ENCODE measurements at regions of chr5 and their contacts with region 1.

Region 1: DNA sequence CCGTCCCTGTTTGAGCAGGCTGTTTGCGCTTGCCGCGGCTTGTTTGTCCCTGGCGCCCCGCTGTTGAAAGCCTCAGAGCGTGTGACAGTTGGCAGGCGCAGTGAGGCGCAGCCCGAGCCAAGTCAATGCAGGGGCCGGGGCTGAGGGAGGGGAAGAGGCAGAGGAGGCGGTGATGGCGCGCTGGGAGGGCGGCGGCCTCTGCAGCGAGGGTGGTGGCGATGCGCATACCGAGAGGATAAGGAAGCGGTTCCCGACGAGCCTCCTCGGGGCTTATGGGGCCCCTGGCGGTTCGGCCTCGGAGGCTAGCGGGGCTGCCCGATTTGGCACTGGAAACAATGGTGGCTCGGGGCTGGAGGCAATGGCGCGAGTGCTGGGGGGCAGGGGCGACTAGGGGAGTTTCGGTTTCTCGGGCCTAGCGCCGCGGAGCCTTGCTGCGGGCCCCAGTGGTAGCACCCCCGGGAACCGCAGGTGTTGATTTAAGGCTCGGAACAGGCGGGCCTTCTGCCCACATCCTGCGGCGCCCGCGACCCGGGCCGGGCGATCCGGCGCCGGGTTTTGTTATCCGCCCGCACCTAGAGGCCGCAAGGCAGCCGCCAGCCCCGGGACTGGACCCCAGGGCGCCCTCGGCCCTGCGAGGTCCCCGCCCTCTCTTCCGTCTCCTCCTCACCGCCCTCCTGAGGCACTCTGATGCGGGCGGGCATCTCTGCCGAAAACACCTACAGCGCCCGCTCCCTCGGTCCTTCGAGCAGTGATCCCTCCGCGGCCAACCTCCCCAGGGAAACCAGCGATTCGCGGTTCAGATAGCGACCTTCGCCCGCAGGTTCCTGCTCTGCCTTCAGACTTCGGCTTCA is 947 bp upstream of the LNPEP start:
- DNase-seq: peak; percentile 93 to 95
- H3K4me3 ChIP-seq: peak overlapping the region; percentile 80 to 96
- H3K27ac ChIP-seq: peak overlapping the region; percentile 88 to 98
- H3K4me1 ChIP-seq: peaks cover 0 to 43% (median 21%) of the 10 kb centered on the region in 4 donors
- H3K27me3 ChIP-seq: no peaks in the 10 kb centered on the region
- CTCF ChIP-seq: peak in 1 of 2 experiments; percentile 36

Region 2: GRCh38 chr5:96548947-96549346 is 386.0 kb before region 1 on chr5:
- intact Hi-C with region 1: no loop called
- DNase-seq: no peak
- H3K4me3 ChIP-seq: no peak overlapping the region
- H3K27ac ChIP-seq: no peak overlapping the region
- H3K4me1 ChIP-seq: no peaks in the 10 kb centered on the region
- H3K27me3 ChIP-seq: no peaks in the 10 kb centered on the region
- CTCF ChIP-seq: no peak

Region 3: GRCh38 chr5:96807075-96807654 is 127.8 kb before region 1 on chr5:
- intact Hi-C with region 1: loop called (anchors 5 kb)
- DNase-seq: peak; percentile 68 to 89
- H3K4me3 ChIP-seq: peak overlapping the region; percentile 91 to 96
- H3K27ac ChIP-seq: peak overlapping the region; percentile 100
- H3K4me1 ChIP-seq: peaks cover 0 to 20% (median 2%) of the 10 kb centered on the region in 4 donors
- H3K27me3 ChIP-seq: no peaks in the 10 kb centered on the region
- CTCF ChIP-seq: no peak

Region 4: DNA sequence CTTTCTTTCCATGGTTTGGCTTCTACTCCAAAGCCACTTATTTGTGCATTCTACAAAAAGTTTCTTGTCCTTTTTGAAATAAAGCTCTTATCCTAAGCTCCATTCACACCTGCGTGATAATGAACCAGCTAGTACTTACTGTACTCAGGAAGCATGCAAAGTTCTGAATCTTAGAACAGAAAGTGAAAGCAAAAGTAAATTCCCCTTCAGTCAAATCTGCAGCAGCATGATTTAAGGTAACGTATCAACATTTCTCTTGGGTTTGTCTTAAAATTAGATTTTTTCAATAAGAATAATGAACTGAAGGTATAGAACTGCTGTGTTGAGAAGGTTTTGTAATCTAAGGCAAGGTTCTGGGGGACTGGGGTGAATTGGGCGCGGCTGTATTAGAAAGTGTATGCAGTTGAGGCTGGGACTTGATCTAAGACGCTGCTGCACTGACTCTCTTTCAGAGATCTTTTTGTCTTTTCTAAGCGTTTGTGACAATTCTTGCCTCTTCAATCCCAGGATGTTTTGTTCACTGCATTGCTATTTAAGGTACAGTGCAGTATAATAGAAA is 58.6 kb before region 1 on chr5 and contains the start of gene ERAP2:
- intact Hi-C with region 1: loop called (anchors 2 kb)
- DNase-seq: no peak
- H3K4me3 ChIP-seq: peak within 1 kb of the TSS; percentile 58 to 71
- H3K27ac ChIP-seq: peak within 1 kb of the TSS; percentile 65 to 67
- H3K4me1 ChIP-seq: peaks cover 0 to 18% (median 0%) of the 10 kb centered on the region in 4 donors
- H3K27me3 ChIP-seq: no peaks in the 10 kb centered on the region
- CTCF ChIP-seq: no peak

Region 5: DNA sequence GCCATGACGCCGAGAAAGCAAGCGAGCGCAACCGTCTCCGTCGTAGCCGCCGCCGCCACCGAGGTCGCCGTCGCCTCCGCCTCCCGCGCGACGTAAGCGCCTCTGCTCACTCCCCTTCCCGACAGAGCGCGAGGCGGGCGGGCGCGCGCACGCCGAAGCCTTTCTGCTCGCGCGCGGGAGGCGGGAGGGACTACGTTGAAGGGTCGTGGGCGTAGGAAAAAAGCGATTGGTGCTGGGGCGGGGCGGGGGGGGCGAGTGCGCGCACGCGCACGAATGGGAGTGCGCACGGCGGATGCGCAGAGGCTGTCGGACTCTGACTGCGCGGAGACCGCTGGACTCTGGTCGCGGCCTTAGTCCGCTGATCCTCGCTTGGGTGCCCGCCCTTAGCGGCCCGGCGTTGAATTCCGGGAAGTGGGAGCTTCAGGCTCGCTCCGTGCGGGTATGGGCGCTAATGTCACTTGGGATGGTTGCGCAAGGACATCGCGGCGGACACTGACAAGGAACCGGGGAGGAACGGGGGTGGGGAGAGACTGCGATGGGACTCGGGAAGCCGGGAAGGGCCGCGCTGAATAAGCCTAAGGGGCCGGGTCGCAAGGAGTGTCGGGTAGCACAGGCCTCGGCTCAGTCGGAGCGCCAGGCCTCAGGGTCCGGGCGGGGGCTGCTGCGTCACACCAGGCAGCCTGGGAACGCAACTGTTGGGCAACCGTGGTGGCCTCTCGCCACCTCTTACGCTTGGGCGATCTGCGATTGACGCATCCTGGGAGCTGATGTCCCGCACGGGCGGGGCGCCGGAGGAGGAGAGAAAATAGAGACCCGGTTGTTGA is 1994.2 kb after region 1 on chr5 and contains the start of gene CHD1:
- intact Hi-C with region 1: loop called (anchors 10 kb)
- DNase-seq: peak; percentile 98 to 99
- H3K4me3 ChIP-seq: peak within 1 kb of the TSS; percentile 88 to 95
- H3K27ac ChIP-seq: peak within 1 kb of the TSS; percentile 100
- H3K4me1 ChIP-seq: peaks cover 0 to 57% (median 18%) of the 10 kb centered on the region in 4 donors
- H3K27me3 ChIP-seq: no peaks in the 10 kb centered on the region
- CTCF ChIP-seq: peak in 1 of 2 experiments; percentile 10